T-cell (primary cell): ENCODE measurements at regions of chr2 and their contacts with region 1.

Region 1: DNA sequence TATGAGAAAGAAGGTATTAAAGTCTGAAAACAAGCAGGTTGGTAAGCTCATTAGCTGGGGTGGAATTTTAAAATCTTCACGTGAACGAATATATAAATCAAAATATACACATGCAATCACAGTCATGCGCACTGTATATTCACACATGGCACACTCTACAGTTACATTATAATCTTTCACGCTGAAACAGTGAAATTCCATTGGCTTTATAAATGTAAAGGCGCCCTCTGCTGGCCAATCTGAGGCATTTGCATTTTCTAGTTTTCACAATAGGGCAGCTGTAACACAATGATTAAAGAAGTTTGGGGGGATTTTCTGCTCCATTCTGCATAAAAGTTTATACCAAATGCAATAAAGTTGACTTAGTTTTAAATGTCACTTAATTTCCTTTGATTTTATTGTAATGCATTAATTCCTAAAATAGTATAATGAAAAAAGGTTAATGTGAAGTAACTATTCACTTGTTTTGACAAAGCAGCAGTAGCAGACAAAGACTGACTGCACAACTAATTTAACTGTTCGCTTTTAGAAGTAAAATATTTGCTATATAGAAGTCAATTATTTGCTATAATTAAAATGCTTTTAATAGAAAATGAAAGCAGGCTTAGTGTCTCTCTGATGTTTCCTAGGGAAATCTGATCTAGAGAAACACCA is 17.2 kb downstream of the IFIH1 start:
- DNase-seq: peak in 32 of 35 experiments; percentile 8 to 78 (median 40)
- ATAC-seq: peak; percentile 61 to 79 (median 68)
- H3K4me3 ChIP-seq: no peak overlapping the region
- H3K4me3 Mint-ChIP-seq: no peak overlapping the region
- H3K27ac ChIP-seq: no peak overlapping the region
- H3K27ac Mint-ChIP-seq: no peak overlapping the region
- H3K4me1 ChIP-seq: no peaks in the 10 kb centered on the region
- H3K4me1 Mint-ChIP-seq: peaks cover 0 to 5% (median 1%) of the 10 kb centered on the region in 3 donors
- H3K27me3 ChIP-seq: no peaks in the 10 kb centered on the region
- H3K27me3 Mint-ChIP-seq: no peaks in the 10 kb centered on the region

Region 2: GRCh38 chr2:162153608-162154224 is 147.6 kb before region 1 on chr2:
- CTCF ChIA-PET with region 1: interaction called, 10 to 15 read pairs
- POLR2A ChIA-PET with region 1: no interaction called
- DNase-seq: peak; percentile 3 to 74 (median 45)
- ATAC-seq: peak; percentile 83 to 97 (median 91)
- H3K4me3 ChIP-seq: no peak overlapping the region
- H3K4me3 Mint-ChIP-seq: peak overlapping the region; percentile 4 to 34 (median 15)
- H3K27ac ChIP-seq: no peak overlapping the region
- H3K27ac Mint-ChIP-seq: no peak overlapping the region
- H3K4me1 ChIP-seq: no peaks in the 10 kb centered on the region
- H3K4me1 Mint-ChIP-seq: peaks cover 5 to 8% (median 6%) of the 10 kb centered on the region in 3 donors
- H3K27me3 ChIP-seq: peaks cover 0 to 3% of the 10 kb centered on the region in 2 experiments
- H3K27me3 Mint-ChIP-seq: peaks cover 30 to 36% of the 10 kb centered on the region in 2 donors

Region 3: DNA sequence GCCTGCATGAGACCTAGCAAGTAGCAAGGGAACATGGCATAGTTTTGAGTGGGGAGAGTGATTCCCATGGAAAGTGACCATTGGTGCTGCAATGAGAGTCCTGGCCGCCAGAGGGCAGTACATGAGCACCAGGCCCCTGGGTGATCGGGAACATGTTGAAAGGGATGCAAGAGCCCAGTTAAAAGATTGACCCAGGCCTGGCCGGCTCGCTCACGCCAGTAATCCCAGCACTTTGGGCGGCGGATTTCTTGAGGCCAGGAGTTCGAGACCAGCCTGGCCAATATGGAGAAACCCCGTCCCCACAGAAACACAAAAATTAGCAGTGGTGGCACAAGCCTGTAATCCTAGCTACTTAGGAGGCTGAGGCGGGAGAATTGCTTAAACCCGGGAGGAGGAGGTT is 80.2 kb before region 1 on chr2:
- CTCF ChIA-PET with region 1: interaction called, 10 to 121 read pairs
- POLR2A ChIA-PET with region 1: interaction called in 1 of 2 experiments, 3 read pairs
- DNase-seq: peak in 28 of 35 experiments; percentile 3 to 60 (median 36)
- ATAC-seq: peak in 3 of 4 experiments; percentile 55 to 61 (median 58)
- H3K4me3 ChIP-seq: no peak overlapping the region
- H3K4me3 Mint-ChIP-seq: no peak overlapping the region
- H3K27ac ChIP-seq: no peak overlapping the region
- H3K27ac Mint-ChIP-seq: no peak overlapping the region
- H3K4me1 ChIP-seq: peaks cover 0 to 3% of the 10 kb centered on the region in 2 experiments
- H3K4me1 Mint-ChIP-seq: no peaks in the 10 kb centered on the region
- H3K27me3 ChIP-seq: peaks cover 0 to 5% of the 10 kb centered on the region in 2 experiments
- H3K27me3 Mint-ChIP-seq: peaks cover 23 to 31% of the 10 kb centered on the region in 2 donors

Region 4: DNA sequence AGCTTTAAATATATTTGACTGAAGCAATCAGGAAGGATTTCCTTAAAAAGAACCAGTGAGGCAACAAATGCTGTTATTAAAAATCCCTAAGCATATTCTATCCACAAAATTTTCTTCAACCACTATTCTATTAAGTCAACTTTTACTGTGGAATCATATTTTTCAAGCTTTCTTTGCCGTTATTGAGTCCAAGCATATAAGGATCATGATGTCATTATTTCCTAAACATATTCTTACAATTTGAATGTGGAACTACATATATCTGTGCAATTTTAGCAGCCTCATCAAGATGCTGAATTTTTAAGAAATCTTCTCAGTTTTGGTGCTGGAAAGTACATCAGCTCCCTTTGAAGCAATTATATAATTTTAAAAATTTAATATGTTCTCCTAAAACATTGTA is 11.6 kb after region 1 on chr2:
- CTCF ChIA-PET with region 1: interaction called, 14 to 30 read pairs
- POLR2A ChIA-PET with region 1: interaction called in 1 of 2 experiments, 6 read pairs
- DNase-seq: no peak
- ATAC-seq: no peak
- H3K4me3 ChIP-seq: no peak overlapping the region
- H3K4me3 Mint-ChIP-seq: no peak overlapping the region
- H3K27ac ChIP-seq: no peak overlapping the region
- H3K27ac Mint-ChIP-seq: peak overlapping the region in 1 of 2 donors; percentile 36
- H3K4me1 ChIP-seq: peaks cover 9% of the 10 kb centered on the region in 2 experiments
- H3K4me1 Mint-ChIP-seq: peaks cover 68 to 77% (median 71%) of the 10 kb centered on the region in 3 donors
- H3K27me3 ChIP-seq: no peaks in the 10 kb centered on the region
- H3K27me3 Mint-ChIP-seq: no peaks in the 10 kb centered on the region

Region 5: GRCh38 chr2:162318328-162319180 is 17.3 kb after region 1 on chr2 and contains the start of gene IFIH1:
- CTCF ChIA-PET with region 1: interaction called, 14 to 30 read pairs
- POLR2A ChIA-PET with region 1: interaction called in 1 of 2 experiments, 6 read pairs
- DNase-seq: peak; percentile 40 to 91 (median 77)
- ATAC-seq: peak; percentile 72 to 90 (median 74)
- H3K4me3 ChIP-seq: peak within 1 kb of the TSS; percentile 73 to 90
- H3K4me3 Mint-ChIP-seq: peak within 1 kb of the TSS; percentile 94 to 98 (median 97)
- H3K27ac ChIP-seq: peak within 1 kb of the TSS; percentile 92
- H3K27ac Mint-ChIP-seq: peak within 1 kb of the TSS; percentile 98 to 100
- H3K4me1 ChIP-seq: peaks cover 15 to 18% of the 10 kb centered on the region in 2 experiments
- H3K4me1 Mint-ChIP-seq: peaks cover 63 to 72% (median 67%) of the 10 kb centered on the region in 3 donors
- H3K27me3 ChIP-seq: no peaks in the 10 kb centered on the region
- H3K27me3 Mint-ChIP-seq: no peaks in the 10 kb centered on the region
- total RNA-seq, gene IFIH1: 25.1 to 34.1 (median 29.2) TPM

Region 6: GRCh38 chr2:162328424-162329157 is 27.3 kb after region 1 on chr2:
- CTCF ChIA-PET with region 1: interaction called, 6 to 11 read pairs
- POLR2A ChIA-PET with region 1: no interaction called
- DNase-seq: no peak
- ATAC-seq: no peak
- H3K4me3 ChIP-seq: no peak overlapping the region
- H3K4me3 Mint-ChIP-seq: no peak overlapping the region
- H3K27ac ChIP-seq: no peak overlapping the region
- H3K27ac Mint-ChIP-seq: no peak overlapping the region
- H3K4me1 ChIP-seq: no peaks in the 10 kb centered on the region
- H3K4me1 Mint-ChIP-seq: peaks cover 0 to 2% (median 0%) of the 10 kb centered on the region in 3 donors
- H3K27me3 ChIP-seq: no peaks in the 10 kb centered on the region
- H3K27me3 Mint-ChIP-seq: no peaks in the 10 kb centered on the region

Region 7: DNA sequence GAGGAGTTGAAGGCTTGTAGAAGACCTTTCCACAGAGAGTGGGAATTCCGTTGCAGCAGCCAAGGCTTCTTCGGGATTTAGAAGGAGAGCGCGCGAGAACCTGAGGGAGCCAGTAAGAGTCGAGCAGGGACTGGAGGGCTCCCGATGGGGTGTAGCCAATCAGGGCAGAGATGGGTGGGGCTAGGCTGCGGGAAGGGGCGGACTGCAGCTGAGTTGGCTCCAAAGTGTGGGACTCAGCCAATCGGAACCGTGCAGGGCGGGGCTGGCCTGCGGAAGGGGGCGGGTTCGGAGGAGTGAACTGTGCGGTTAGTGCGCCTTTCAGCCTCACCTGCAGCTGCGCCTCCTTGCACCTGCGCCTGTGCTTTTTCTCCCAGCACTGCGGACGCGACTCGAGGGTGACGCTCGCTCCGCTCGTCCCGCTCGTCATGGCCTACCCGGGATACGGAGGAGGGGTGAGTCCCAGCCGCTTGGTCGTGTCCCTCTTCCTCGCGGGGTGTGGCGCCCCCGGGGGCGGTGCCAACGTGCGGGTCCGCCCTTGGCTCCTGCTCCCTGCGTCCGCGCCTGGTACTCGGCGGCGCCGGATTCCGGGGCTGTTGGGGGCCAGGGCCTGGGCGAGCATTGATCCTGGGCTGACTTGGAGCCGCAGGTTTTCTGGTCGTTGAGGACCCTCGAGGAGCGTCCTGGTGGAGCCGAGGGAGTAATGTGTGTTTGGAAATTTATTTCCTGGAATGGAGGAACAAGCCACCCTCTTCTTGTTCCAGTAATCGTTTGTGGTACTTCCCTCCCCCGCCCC is 42.7 kb after region 1 on chr2 and contains the start of gene GCA:
- CTCF ChIA-PET with region 1: interaction called, 4 to 11 read pairs
- POLR2A ChIA-PET with region 1: interaction called, 4 to 6 read pairs
- DNase-seq: peak; percentile 95 to 100 (median 98)
- ATAC-seq: peak; percentile 96 to 99 (median 98)
- H3K4me3 ChIP-seq: peak within 1 kb of the TSS; percentile 75 to 84
- H3K4me3 Mint-ChIP-seq: peak within 1 kb of the TSS; percentile 89 to 90 (median 89)
- H3K27ac ChIP-seq: no peak within 1 kb of the TSS
- H3K27ac Mint-ChIP-seq: peak within 1 kb of the TSS; percentile 68 to 74
- H3K4me1 ChIP-seq: peaks cover 8 to 9% of the 10 kb centered on the region in 2 experiments
- H3K4me1 Mint-ChIP-seq: peaks cover 14 to 22% (median 21%) of the 10 kb centered on the region in 3 donors
- H3K27me3 ChIP-seq: no peaks in the 10 kb centered on the region
- H3K27me3 Mint-ChIP-seq: no peaks in the 10 kb centered on the region
- total RNA-seq, gene GCA: 6.5 to 12.8 (median 10.0) TPM

Region 8: GRCh38 chr2:162379719-162380580 is 78.7 kb after region 1 on chr2:
- CTCF ChIA-PET with region 1: no interaction called
- POLR2A ChIA-PET with region 1: no interaction called
- DNase-seq: no peak
- ATAC-seq: no peak
- H3K4me3 ChIP-seq: no peak overlapping the region
- H3K4me3 Mint-ChIP-seq: peak overlapping the region; percentile 40 to 59 (median 49)
- H3K27ac ChIP-seq: no peak overlapping the region
- H3K27ac Mint-ChIP-seq: no peak overlapping the region
- H3K4me1 ChIP-seq: no peaks in the 10 kb centered on the region
- H3K4me1 Mint-ChIP-seq: no peaks in the 10 kb centered on the region
- H3K27me3 ChIP-seq: peaks cover 0 to 3% of the 10 kb centered on the region in 2 experiments
- H3K27me3 Mint-ChIP-seq: peaks cover 15 to 28% of the 10 kb centered on the region in 2 donors

Region 9: GRCh38 chr2:162795312-162795711 is 494.0 kb after region 1 on chr2:
- CTCF ChIA-PET with region 1: no interaction called
- POLR2A ChIA-PET with region 1: no interaction called
- DNase-seq: no peak
- ATAC-seq: no peak
- H3K4me3 ChIP-seq: no peak overlapping the region
- H3K4me3 Mint-ChIP-seq: no peak overlapping the region
- H3K27ac ChIP-seq: no peak overlapping the region
- H3K27ac Mint-ChIP-seq: no peak overlapping the region
- H3K4me1 ChIP-seq: no peaks in the 10 kb centered on the region
- H3K4me1 Mint-ChIP-seq: no peaks in the 10 kb centered on the region
- H3K27me3 ChIP-seq: no peaks in the 10 kb centered on the region
- H3K27me3 Mint-ChIP-seq: no peaks in the 10 kb centered on the region